Activated CD4-positive, alpha-beta T cell treated with anti-CD3 and anti-CD28 coated beads for 36 hours (primary cell): ENCODE measurements at regions of chr21 and their contacts with region 1.

Region 1: GRCh38 chr21:45590246-45590725 is 48.0 kb upstream of the SLC19A1 start:
- DNase-seq: peak; percentile 92
- ATAC-seq: peak; percentile 60
- H3K4me3 Mint-ChIP-seq: peak overlapping the region; percentile 36
- H3K27ac Mint-ChIP-seq: no peak overlapping the region
- H3K4me1 Mint-ChIP-seq: peaks cover 16% of the 10 kb centered on the region
- H3K27me3 Mint-ChIP-seq: peaks cover 16% of the 10 kb centered on the region

Region 2: DNA sequence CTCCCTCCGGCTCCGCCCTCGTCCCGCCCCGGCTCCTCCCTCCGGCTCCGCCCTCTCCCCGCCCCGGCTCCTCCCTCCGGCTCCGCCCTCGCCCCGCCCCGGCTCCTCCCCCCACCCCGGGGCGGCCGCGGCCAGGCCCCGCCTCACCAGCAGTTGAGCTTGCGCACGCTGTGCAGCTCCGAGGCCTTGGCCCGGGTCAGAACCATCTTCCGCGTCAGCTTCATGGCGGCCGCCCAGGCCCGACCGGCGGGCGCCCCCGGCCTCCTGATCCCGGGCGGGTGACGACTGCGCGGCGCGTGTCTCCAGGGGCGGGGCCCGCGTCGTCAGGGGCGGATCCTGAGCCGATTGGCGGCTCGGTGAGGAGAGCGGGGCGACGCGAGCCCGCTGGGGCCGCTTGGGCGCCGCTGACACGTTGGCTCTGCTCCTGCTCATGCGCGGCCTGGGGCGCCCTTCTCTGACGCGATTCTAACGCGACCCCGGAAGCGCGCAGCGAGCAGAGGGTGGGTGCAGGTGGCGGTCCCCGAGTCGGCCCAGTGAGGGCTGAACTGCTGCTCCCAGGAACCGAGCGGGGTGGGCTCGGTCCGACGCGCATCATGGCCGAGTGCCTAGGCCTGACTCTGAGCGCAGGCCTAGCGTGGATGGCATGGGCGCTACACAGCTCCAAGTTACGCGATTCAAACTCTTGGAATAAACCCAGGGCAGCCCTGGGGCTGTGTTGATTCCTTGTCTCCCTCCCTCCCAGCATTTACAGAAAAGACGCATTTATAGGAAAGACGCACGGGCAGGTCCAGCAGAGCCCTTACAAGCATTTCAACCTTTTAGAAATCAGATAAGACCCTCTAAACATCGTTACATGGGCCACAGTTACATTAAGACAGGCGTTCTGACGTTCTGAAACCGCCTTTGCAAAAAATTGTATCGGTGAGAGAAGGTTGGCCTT is 1251.0 kb before region 1 on chr21 and contains the start of gene CFAP410:
- CTCF ChIA-PET with region 1: no interaction called
- POLR2A ChIA-PET with region 1: no interaction called
- intact Hi-C with region 1: loop called in 1 of 2 experiments (anchors 5 kb)
- DNase-seq: peak; percentile 97
- ATAC-seq: peak; percentile 97
- H3K4me3 Mint-ChIP-seq: peak within 1 kb of the TSS; percentile 96
- H3K27ac Mint-ChIP-seq: peak within 1 kb of the TSS; percentile 98
- H3K4me1 Mint-ChIP-seq: peaks cover 18% of the 10 kb centered on the region
- H3K27me3 Mint-ChIP-seq: no peaks in the 10 kb centered on the region
- total RNA-seq, gene CFAP410: 7.3 to 11.4 TPM

Region 3: DNA sequence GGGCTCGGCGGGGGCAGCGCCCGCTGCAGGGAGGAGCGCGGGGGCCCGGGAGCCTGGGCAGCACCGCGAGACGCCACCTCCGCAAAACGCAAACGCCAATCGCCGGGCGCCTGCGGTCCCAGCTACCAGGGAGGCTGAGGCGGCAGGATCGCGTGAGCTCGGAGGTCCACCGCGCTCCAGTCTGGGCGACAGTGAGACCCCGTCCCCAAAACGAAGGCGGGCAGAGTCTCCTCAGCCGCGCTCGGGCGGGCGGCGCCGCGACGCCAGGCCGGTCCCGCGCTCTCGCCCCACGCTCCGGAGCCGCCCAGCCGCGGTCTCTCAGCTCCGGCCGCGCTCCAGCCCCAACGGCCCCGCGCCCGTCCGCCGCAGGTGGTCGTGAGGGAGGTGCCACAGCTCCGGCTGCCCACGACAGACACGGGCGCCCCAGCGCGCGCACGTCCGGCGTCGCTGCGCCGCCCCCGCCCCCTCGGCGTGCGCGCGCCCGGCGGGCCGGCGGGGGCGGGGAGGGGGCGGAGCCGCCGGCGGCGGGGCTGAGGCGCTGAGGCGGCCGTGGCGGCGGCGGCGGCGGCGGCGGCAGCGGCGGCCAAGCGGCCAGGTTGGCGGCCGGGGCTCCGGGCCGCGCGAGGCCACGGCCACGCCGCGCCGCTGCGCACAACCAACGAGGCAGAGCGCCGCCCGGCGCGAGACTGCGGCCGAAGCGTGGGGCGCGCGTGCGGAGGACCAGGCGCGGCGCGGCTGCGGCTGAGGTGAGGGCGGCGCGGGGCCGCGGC is 516.1 kb before region 1 on chr21 and contains the start of gene ADARB1:
- CTCF ChIA-PET with region 1: no interaction called
- POLR2A ChIA-PET with region 1: no interaction called
- intact Hi-C with region 1: loop called in 1 of 2 experiments (anchors 2 kb)
- DNase-seq: peak; percentile 75
- ATAC-seq: peak; percentile 13
- H3K4me3 Mint-ChIP-seq: peak within 1 kb of the TSS; percentile 88
- H3K27ac Mint-ChIP-seq: peak within 1 kb of the TSS; percentile 91
- H3K4me1 Mint-ChIP-seq: peaks cover 42% of the 10 kb centered on the region
- H3K27me3 Mint-ChIP-seq: no peaks in the 10 kb centered on the region
- total RNA-seq, gene ADARB1: 32.8 to 37.7 TPM

Region 4: DNA sequence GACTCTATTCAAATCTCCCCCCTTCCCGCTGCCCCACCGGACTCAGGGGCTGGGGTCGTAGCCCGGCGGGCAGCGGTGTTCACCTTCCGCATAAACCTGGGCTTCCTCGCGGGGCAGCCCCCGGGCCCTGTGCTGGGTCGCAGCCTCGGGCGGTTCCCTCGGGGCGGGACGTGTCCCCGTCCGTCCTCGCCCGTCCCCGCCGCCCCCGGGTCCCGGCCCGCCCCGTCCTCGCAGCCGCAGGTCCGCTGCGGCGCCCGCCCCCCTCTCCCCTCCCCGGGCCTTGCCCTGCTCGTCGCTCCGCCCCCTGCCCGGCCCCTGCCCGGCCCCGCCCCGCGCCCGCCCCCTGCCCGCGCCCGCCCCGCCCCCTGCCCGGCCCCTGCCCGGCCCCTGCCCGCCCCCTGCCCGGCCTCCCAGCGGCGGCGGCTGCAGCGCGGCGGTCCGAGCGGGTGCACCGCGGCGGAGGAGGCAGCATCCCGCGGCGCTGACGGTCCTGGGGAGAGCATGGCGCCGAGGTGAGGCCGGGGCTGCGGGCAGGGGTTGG is 185.5 kb before region 1 on chr21 and contains the start of gene COL18A1:
- CTCF ChIA-PET with region 1: no interaction called
- POLR2A ChIA-PET with region 1: no interaction called
- intact Hi-C with region 1: loop called in 1 of 2 experiments (anchors 5 kb)
- DNase-seq: peak; percentile 70
- ATAC-seq: peak; percentile 55
- H3K4me3 Mint-ChIP-seq: peak within 1 kb of the TSS; percentile 69
- H3K27ac Mint-ChIP-seq: no peak within 1 kb of the TSS
- H3K4me1 Mint-ChIP-seq: peaks cover 13% of the 10 kb centered on the region
- H3K27me3 Mint-ChIP-seq: peaks cover 43% of the 10 kb centered on the region
- total RNA-seq, gene COL18A1: 8.0 to 8.8 TPM

Region 5: DNA sequence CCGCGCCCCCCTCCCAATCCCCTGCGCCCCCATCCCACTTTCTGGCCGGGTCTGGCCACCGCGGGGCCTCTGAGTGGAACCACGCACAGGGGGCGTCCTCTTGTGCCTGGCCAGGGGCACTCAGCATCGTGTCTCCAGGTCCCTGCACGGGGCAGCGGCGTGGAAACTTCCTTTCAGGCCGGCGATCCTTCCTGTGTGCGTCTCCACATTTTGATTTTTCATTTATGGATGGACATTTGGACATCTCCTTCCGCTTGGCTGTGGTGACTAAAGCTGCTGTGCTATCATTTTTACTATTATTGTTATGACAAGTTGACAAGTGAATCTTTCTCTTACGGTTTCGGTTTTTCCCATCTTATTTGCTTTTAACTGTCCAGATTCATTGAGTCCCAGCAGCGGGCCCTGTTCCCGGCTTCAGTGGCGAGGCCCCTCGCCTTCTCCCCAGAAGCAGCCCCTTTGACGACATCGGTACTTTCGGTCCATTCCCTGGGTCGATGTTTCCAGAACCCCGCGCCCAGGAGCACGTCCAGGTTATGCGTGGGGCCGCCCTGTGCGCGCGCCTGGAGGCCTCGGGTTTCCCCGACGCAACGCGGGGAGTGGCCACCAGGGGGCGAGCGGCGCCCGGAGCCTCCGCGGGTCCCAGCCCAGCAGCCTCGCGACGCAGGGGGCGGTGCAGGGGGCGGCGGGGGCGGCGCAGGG is 35.7 kb before region 1 on chr21:
- CTCF ChIA-PET with region 1: interaction called, 11 read pairs
- POLR2A ChIA-PET with region 1: interaction called, 5 read pairs
- intact Hi-C with region 1: loop called in 1 of 2 experiments (anchors 1 kb)
- DNase-seq: peak; percentile 95
- ATAC-seq: peak; percentile 62
- H3K4me3 Mint-ChIP-seq: peak overlapping the region; percentile 95
- H3K27ac Mint-ChIP-seq: peak overlapping the region; percentile 97
- H3K4me1 Mint-ChIP-seq: peaks cover 33% of the 10 kb centered on the region
- H3K27me3 Mint-ChIP-seq: no peaks in the 10 kb centered on the region

Region 6: DNA sequence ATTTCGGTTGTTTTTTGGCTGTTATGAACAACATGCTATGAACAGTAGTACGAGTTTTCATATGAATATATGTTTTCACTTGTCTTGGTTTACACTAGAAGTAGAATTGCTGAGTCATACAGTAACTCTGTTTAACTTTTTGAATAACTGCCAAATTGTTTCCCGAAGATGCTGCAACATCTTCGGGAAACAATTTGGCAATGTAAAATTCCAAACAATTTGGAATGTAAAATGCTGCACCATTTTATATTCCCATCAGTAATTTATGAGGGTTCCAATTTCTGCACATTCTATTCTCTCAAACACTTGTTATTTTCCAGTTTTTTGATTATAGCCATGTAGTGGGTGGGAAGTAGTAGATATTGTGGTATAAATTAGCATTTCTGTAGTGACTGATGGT is 64.8 kb after region 1 on chr21:
- CTCF ChIA-PET with region 1: no interaction called
- POLR2A ChIA-PET with region 1: no interaction called
- intact Hi-C with region 1: no loop called
- DNase-seq: no peak
- ATAC-seq: no peak
- H3K4me3 Mint-ChIP-seq: no peak overlapping the region
- H3K27ac Mint-ChIP-seq: no peak overlapping the region
- H3K4me1 Mint-ChIP-seq: peaks cover 12% of the 10 kb centered on the region
- H3K27me3 Mint-ChIP-seq: no peaks in the 10 kb centered on the region

Region 7: DNA sequence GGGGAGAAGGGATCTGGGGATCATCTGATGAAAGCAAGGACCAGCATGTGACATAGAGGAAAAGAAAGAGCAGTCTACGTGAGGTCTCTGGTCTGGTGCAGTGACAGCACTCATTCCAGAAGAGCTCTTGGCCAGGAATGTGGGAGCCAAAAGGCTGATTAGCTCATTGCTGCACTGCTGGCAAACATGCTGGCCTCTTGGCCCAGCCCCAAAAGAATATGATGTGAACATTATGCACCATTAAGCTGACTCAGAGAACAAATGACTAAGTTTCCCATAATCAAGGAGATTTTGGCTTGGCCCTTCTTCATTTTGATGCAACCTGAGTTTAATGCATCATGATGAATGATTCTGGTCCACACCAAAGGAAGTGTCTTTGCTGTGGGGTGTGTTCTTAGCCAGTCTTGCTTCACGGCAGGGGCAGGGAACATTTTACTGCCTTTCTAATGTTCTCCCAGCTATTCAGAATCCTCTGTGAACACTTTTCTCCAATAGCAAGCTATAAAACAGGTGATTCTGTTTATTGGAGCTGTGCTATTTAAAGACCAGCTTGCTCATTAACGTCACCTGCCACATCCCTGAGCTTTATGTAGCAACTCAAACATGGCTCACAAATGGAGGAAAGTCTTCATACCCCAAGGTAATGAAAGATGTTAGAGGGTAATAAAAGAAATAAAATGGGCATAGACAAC is 108.4 kb after region 1 on chr21:
- CTCF ChIA-PET with region 1: interaction called, 3 read pairs
- POLR2A ChIA-PET with region 1: interaction called, 3 read pairs
- intact Hi-C with region 1: loop called in 1 of 2 experiments (anchors 1 kb)
- DNase-seq: peak; percentile 61
- ATAC-seq: peak; percentile 84
- H3K4me3 Mint-ChIP-seq: no peak overlapping the region
- H3K27ac Mint-ChIP-seq: peak overlapping the region; percentile 83
- H3K4me1 Mint-ChIP-seq: peaks cover 34% of the 10 kb centered on the region
- H3K27me3 Mint-ChIP-seq: no peaks in the 10 kb centered on the region

Region 8: GRCh38 chr21:45981151-45982089 is 391.1 kb after region 1 on chr21 and contains the start of gene COL6A1:
- CTCF ChIA-PET with region 1: no interaction called
- POLR2A ChIA-PET with region 1: no interaction called
- intact Hi-C with region 1: loop called in 1 of 2 experiments (anchors 2 kb)
- DNase-seq: peak; percentile 77
- ATAC-seq: peak; percentile 56
- H3K4me3 Mint-ChIP-seq: peak within 1 kb of the TSS; percentile 10
- H3K27ac Mint-ChIP-seq: no peak within 1 kb of the TSS
- H3K4me1 Mint-ChIP-seq: peaks cover 8% of the 10 kb centered on the region
- H3K27me3 Mint-ChIP-seq: peaks cover 4% of the 10 kb centered on the region
- total RNA-seq, gene COL6A1: 0.57 to 0.69 TPM